Endothelial cell of umbilical vein (primary cell): ENCODE measurements at regions of chr5 and their contacts with region 1.

Region 1: DNA sequence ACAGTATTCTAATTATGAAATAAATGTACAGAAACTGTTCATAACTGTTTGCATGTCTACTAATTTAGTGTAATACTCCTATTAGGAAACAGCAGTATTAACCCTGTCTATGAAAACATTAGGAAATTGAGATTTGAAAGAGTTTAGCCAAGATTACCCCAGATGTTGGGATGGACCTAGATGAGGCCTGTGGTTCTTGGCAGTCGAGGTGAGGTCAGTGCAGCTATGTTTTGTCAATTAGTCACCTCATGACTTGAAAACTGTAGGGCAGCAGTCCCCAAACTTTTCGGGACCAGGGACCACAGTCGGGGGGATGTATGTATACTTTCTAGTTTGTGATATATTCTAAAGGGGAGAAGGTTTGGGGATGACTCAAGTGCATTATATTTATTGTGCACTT is 4.7 kb downstream of the LNPEP start:
- DNase-seq: no peak
- H3K4me3 ChIP-seq: no peak overlapping the region
- H3K27ac ChIP-seq: no peak overlapping the region
- H3K4me1 ChIP-seq: peaks cover 5% of the 10 kb centered on the region
- H3K27me3 ChIP-seq: no peaks in the 10 kb centered on the region
- CTCF ChIP-seq: no peak
- POLR2A ChIP-seq: no peak

Region 2: DNA sequence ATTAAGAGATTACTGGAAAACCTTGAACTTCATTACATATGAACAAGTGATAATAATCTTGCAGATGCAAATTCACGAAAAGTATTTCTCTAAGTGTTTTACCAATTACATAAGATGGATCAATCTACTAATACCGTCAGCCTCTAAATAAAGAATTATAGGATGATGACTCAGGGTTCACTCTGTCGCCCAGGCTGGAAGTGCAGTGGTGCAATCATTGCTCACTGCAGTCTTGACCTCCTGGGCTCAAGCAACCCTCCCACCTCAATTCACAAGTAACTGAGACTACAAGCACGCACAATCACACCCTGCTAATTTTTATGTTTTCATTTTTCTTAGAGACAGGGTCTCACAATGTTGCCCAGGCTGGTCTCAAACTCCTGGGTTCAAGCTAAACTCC is 1932.1 kb after region 1 on chr5:
- CTCF ChIA-PET with region 1: no interaction called
- POLR2A ChIA-PET with region 1: interaction called, 13 read pairs
- dilution Hi-C with region 1: no loop called
- intact Hi-C with region 1: no loop called
- DNase-seq: no peak
- H3K4me3 ChIP-seq: no peak overlapping the region
- H3K27ac ChIP-seq: no peak overlapping the region
- H3K4me1 ChIP-seq: no peaks in the 10 kb centered on the region
- H3K27me3 ChIP-seq: no peaks in the 10 kb centered on the region
- CTCF ChIP-seq: no peak
- POLR2A ChIP-seq: no peak